MCF 10A (cell line): ENCODE measurements at regions of chr5 and their contacts with region 1.

Region 1: DNA sequence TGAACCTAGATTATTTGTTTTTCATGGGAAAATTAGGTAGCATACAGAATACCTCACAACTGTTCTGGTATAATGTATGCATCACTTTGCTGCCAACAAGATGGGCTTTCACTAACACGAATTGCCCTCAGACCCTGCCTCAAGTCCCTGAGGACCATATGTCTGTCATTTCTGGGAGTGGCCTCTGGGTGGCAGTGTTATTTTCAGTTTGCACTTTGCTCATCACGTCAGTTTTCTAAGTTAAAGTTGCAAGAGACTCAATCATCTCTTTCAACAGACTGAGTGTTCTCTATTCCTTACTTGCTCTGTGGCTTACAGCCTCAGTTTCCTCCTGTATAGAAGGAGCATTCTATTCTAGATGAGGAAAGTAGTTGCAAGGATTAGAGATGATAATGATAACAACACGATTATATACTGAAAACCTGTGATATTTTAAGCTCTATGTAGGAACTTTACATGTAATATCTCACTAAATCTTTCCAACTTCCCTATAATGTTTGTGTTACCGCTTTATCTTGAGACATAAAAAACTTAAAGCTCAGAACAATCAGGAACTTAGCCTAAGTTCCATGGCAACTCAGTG is 55.7 kb downstream of the TSSK1B start:
- DNase-seq: peak; percentile 73
- H3K4me3 Mint-ChIP-seq: no peak overlapping the region
- H3K27ac Mint-ChIP-seq: no peak overlapping the region
- H3K4me1 Mint-ChIP-seq: peaks cover 12% of the 10 kb centered on the region
- H3K27me3 Mint-ChIP-seq: no peaks in the 10 kb centered on the region
- CTCF ChIP-seq: peak; percentile 66

Region 2: GRCh38 chr5:113209498-113209897 is 169.6 kb before region 1 on chr5:
- CTCF ChIA-PET with region 1: no interaction called
- POLR2A ChIA-PET with region 1: no interaction called
- intact Hi-C with region 1: no loop called
- DNase-seq: no peak
- H3K4me3 Mint-ChIP-seq: no peak overlapping the region
- H3K27ac Mint-ChIP-seq: no peak overlapping the region
- H3K4me1 Mint-ChIP-seq: peaks cover 12% of the 10 kb centered on the region
- H3K27me3 Mint-ChIP-seq: no peaks in the 10 kb centered on the region
- CTCF ChIP-seq: no peak

Region 3: GRCh38 chr5:113264042-113264441 is 115.0 kb before region 1 on chr5:
- CTCF ChIA-PET with region 1: no interaction called
- POLR2A ChIA-PET with region 1: no interaction called
- intact Hi-C with region 1: no loop called
- DNase-seq: peak; percentile 86
- H3K4me3 Mint-ChIP-seq: no peak overlapping the region
- H3K27ac Mint-ChIP-seq: peak overlapping the region; percentile 63
- H3K4me1 Mint-ChIP-seq: peaks cover 42% of the 10 kb centered on the region
- H3K27me3 Mint-ChIP-seq: no peaks in the 10 kb centered on the region
- CTCF ChIP-seq: no peak

Region 4: DNA sequence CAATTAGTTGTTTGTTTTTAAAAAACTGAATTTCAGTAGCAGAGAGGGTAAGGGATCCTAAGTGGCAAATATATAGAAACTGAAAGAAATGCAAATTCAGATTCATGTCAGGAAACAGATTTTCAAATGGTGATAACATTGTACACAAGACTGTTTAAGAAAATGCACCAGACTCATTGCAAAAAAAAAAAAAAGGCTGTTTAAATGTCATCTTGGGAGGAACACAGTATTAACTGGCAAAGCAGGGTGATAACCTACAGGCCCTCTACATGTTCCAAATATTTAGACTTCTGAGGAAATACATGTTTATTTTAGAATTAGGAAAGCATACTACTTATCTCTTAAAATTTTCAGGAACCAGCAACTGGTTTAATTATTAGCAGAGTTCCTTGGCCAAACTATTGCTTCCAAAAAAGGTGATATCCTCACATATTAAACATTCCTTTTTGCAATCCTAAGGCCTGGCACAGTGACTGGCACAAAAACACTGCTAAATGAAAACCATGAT is 58.7 kb before region 1 on chr5:
- CTCF ChIA-PET with region 1: no interaction called
- POLR2A ChIA-PET with region 1: no interaction called
- intact Hi-C with region 1: no loop called
- DNase-seq: no peak
- H3K4me3 Mint-ChIP-seq: no peak overlapping the region
- H3K27ac Mint-ChIP-seq: no peak overlapping the region
- H3K4me1 Mint-ChIP-seq: no peaks in the 10 kb centered on the region
- H3K27me3 Mint-ChIP-seq: no peaks in the 10 kb centered on the region
- CTCF ChIP-seq: no peak

Region 5: GRCh38 chr5:113336975-113337374 is 42.1 kb before region 1 on chr5:
- CTCF ChIA-PET with region 1: interaction called, 18 read pairs
- POLR2A ChIA-PET with region 1: no interaction called
- intact Hi-C with region 1: loop called (anchors 1 kb)
- DNase-seq: peak; percentile 81
- H3K4me3 Mint-ChIP-seq: no peak overlapping the region
- H3K27ac Mint-ChIP-seq: no peak overlapping the region
- H3K4me1 Mint-ChIP-seq: peaks cover 6% of the 10 kb centered on the region
- H3K27me3 Mint-ChIP-seq: no peaks in the 10 kb centered on the region
- CTCF ChIP-seq: peak; percentile 45

Region 6: GRCh38 chr5:113361701-113362100 is 17.3 kb before region 1 on chr5:
- CTCF ChIA-PET with region 1: interaction called, 12 read pairs
- POLR2A ChIA-PET with region 1: interaction called, 4 read pairs
- intact Hi-C with region 1: no loop called
- DNase-seq: no peak
- H3K4me3 Mint-ChIP-seq: no peak overlapping the region
- H3K27ac Mint-ChIP-seq: no peak overlapping the region
- H3K4me1 Mint-ChIP-seq: no peaks in the 10 kb centered on the region
- H3K27me3 Mint-ChIP-seq: no peaks in the 10 kb centered on the region
- CTCF ChIP-seq: no peak

Region 7: GRCh38 chr5:113367586-113367985 is 11.5 kb before region 1 on chr5:
- CTCF ChIA-PET with region 1: interaction called, 12 read pairs
- POLR2A ChIA-PET with region 1: interaction called, 4 read pairs
- intact Hi-C with region 1: no loop called
- DNase-seq: no peak
- H3K4me3 Mint-ChIP-seq: no peak overlapping the region
- H3K27ac Mint-ChIP-seq: no peak overlapping the region
- H3K4me1 Mint-ChIP-seq: peaks cover 4% of the 10 kb centered on the region
- H3K27me3 Mint-ChIP-seq: no peaks in the 10 kb centered on the region
- CTCF ChIP-seq: no peak

Region 8: DNA sequence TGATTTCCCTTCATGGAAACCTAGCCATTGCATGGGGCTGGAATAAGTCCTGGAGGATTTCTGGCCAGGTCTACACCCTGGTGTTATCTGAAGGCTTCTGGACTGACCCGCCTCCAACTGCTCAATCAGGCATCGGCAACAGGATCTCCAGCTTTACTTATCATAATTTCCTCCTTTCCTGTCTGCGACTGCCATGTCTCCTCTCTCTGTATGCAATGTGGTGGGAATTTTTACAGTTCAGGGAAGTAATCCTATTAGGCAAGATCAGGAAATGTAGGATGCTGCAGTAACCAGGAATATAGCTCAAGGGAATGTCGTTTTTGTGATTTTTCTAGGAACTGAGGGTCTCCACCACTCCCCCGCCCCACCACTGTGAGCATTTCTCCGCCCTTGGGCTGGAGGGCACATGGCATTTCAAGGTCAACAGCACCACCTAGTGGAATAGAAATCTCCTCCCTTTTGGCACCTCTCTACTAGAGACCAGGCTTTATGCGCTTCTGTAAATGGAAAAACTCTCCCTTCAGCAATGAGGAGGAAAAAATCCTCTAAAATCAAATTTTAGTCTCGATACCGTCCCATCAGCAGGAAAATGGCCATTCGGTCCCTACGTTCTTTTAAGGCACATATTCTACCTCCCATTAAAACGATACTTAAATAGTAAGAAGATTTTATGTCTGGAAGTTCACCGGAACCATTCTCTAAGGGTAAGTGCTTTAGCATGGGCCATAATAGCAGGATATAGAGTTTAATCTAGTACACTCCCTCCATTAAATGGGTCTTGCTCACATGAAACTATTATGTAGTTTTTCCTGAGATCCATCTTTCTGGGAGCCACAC is 227.5 kb after region 1 on chr5:
- CTCF ChIA-PET with region 1: interaction called, 4 read pairs
- POLR2A ChIA-PET with region 1: no interaction called
- intact Hi-C with region 1: loop called (anchors 1 kb)
- DNase-seq: peak; percentile 70
- H3K4me3 Mint-ChIP-seq: no peak overlapping the region
- H3K27ac Mint-ChIP-seq: no peak overlapping the region
- H3K4me1 Mint-ChIP-seq: no peaks in the 10 kb centered on the region
- H3K27me3 Mint-ChIP-seq: no peaks in the 10 kb centered on the region
- CTCF ChIP-seq: peak; percentile 91